CD4-positive, alpha-beta memory T cell (primary cell): ENCODE measurements at regions of chr1 and their contacts with region 1.

Region 1: GRCh38 chr1:226547754-226548191 is 791 bp upstream of the STUM start:
- DNase-seq: peak; percentile 49 to 63 (median 56)
- H3K4me3 ChIP-seq: peak overlapping the region in 1 of 2 donors; percentile 28
- H3K4me3 Mint-ChIP-seq: peak overlapping the region in 6 of 8 donors; percentile 33 to 71 (median 56)
- H3K27ac ChIP-seq: no peak overlapping the region
- H3K27ac Mint-ChIP-seq: no peak overlapping the region
- H3K4me1 ChIP-seq: peaks cover 22% of the 10 kb centered on the region
- H3K4me1 Mint-ChIP-seq: peaks cover 10 to 21% (median 14%) of the 10 kb centered on the region in 4 donors
- H3K27me3 ChIP-seq: peaks cover 17% of the 10 kb centered on the region
- H3K27me3 Mint-ChIP-seq: peaks cover 23 to 33% of the 10 kb centered on the region in 2 donors

Region 2: GRCh38 chr1:226563666-226564065 is 15.9 kb after region 1 on chr1:
- CTCF ChIA-PET with region 1: interaction called, 12 read pairs
- POLR2A ChIA-PET with region 1: no interaction called
- intact Hi-C with region 1: no loop called
- DNase-seq: no peak
- H3K4me3 ChIP-seq: no peak overlapping the region
- H3K4me3 Mint-ChIP-seq: no peak overlapping the region
- H3K27ac ChIP-seq: no peak overlapping the region
- H3K27ac Mint-ChIP-seq: no peak overlapping the region
- H3K4me1 ChIP-seq: no peaks in the 10 kb centered on the region
- H3K4me1 Mint-ChIP-seq: no peaks in the 10 kb centered on the region
- H3K27me3 ChIP-seq: no peaks in the 10 kb centered on the region
- H3K27me3 Mint-ChIP-seq: peaks cover 10 to 13% of the 10 kb centered on the region in 2 donors

Region 3: GRCh38 chr1:226608699-226609505 is 61.1 kb after region 1 on chr1:
- CTCF ChIA-PET with region 1: interaction called, 25 read pairs
- POLR2A ChIA-PET with region 1: no interaction called
- intact Hi-C with region 1: loop called (anchors 2 kb)
- DNase-seq: peak; percentile 56 to 65 (median 62)
- H3K4me3 ChIP-seq: no peak overlapping the region
- H3K4me3 Mint-ChIP-seq: no peak overlapping the region
- H3K27ac ChIP-seq: no peak overlapping the region
- H3K27ac Mint-ChIP-seq: peak overlapping the region in 2 of 7 donors; percentile 8 to 55
- H3K4me1 ChIP-seq: no peaks in the 10 kb centered on the region
- H3K4me1 Mint-ChIP-seq: no peaks in the 10 kb centered on the region
- H3K27me3 ChIP-seq: no peaks in the 10 kb centered on the region
- H3K27me3 Mint-ChIP-seq: peaks cover 0 to 9% of the 10 kb centered on the region in 2 donors

Region 4: GRCh38 chr1:226674892-226675714 is 127.3 kb after region 1 on chr1:
- CTCF ChIA-PET with region 1: no interaction called
- POLR2A ChIA-PET with region 1: no interaction called
- intact Hi-C with region 1: no loop called
- DNase-seq: peak; percentile 84 to 95 (median 89)
- H3K4me3 ChIP-seq: peak overlapping the region; percentile 8 to 41
- H3K4me3 Mint-ChIP-seq: peak overlapping the region; percentile 72 to 96 (median 86)
- H3K27ac ChIP-seq: peak overlapping the region; percentile 89
- H3K27ac Mint-ChIP-seq: peak overlapping the region; percentile 94 to 100 (median 99)
- H3K4me1 ChIP-seq: peaks cover 99% of the 10 kb centered on the region
- H3K4me1 Mint-ChIP-seq: peaks cover 85 to 100% (median 93%) of the 10 kb centered on the region in 4 donors
- H3K27me3 ChIP-seq: no peaks in the 10 kb centered on the region
- H3K27me3 Mint-ChIP-seq: peaks cover 0 to 5% of the 10 kb centered on the region in 2 donors

Region 5: GRCh38 chr1:226697151-226697939 is 149.6 kb after region 1 on chr1:
- CTCF ChIA-PET with region 1: no interaction called
- POLR2A ChIA-PET with region 1: no interaction called
- intact Hi-C with region 1: loop called (anchors 10 kb)
- DNase-seq: peak in 1 of 5 donors; percentile 29
- H3K4me3 ChIP-seq: no peak overlapping the region
- H3K4me3 Mint-ChIP-seq: peak overlapping the region in 7 of 8 donors; percentile 9 to 80 (median 42)
- H3K27ac ChIP-seq: peak overlapping the region; percentile 51
- H3K27ac Mint-ChIP-seq: peak overlapping the region; percentile 86 to 95 (median 91)
- H3K4me1 ChIP-seq: peaks cover 95% of the 10 kb centered on the region
- H3K4me1 Mint-ChIP-seq: peaks cover 77 to 97% (median 89%) of the 10 kb centered on the region in 4 donors
- H3K27me3 ChIP-seq: no peaks in the 10 kb centered on the region
- H3K27me3 Mint-ChIP-seq: no peaks in the 10 kb centered on the region